ENCODE measurements at regions of chr18 and their contacts with region 1.

Region 1: DNA sequence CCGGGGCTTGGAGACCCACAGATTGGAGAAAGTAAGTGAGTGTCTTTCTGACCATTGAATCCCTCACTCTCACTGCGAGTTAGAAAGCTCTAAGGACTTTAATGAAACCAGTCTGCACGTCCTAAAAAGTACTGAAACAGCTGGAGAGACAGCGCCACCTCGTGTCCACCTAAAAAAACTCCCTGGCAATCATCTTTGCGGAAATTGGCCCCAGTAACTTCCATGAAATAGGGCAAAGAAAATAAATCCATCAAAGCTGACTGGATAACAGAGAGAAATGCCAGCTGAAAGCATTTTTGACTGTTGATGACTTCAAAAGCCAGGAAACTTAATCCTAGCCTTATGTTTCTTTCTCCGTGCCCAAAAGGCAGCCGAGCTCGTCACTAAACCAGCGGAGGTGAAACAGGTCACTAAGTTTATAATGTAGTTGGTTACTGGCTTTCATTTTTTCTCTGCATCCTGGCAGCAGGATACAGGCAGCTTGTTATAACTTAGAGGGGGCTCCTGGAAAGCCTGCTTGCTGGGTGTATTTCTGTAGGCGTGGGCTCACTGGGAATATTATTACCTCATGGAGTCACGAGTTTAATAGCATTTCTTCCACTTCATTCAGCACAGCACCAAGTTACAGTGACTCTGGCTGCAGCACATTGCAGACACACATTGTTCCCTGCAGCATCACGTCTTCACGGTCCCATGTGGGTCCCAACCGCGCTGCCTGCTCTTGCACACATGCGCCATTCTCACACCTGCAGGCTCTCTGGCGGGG is 266.5 kb downstream of the HRH4 start:
- DNase-seq: peak; percentile 76
- ATAC-seq: peak; percentile 78
- H3K4me3 ChIP-seq: peak overlapping the region; percentile 63; the same call in 1 of the 2 replicates
- H3K27ac ChIP-seq: no peak overlapping the region
- H3K4me1 ChIP-seq: peaks cover 4% of the 10 kb centered on the region; the same call in 1 of the 2 replicates
- H3K27me3 ChIP-seq: peaks cover 55% of the 10 kb centered on the region
- CTCF ChIP-seq: peak; percentile 89

Region 2: GRCh38 chr18:24354286-24354685 is 372.6 kb before region 1 on chr18:
- CTCF ChIA-PET with region 1: no interaction called
- POLR2A ChIA-PET with region 1: no interaction called
- intact Hi-C with region 1: loop called (anchors 10 kb)
- DNase-seq: no peak
- ATAC-seq: no peak
- H3K4me3 ChIP-seq: no peak overlapping the region
- H3K27ac ChIP-seq: no peak overlapping the region
- H3K4me1 ChIP-seq: no peaks in the 10 kb centered on the region
- H3K27me3 ChIP-seq: no peaks in the 10 kb centered on the region
- CTCF ChIP-seq: no peak

Region 3: DNA sequence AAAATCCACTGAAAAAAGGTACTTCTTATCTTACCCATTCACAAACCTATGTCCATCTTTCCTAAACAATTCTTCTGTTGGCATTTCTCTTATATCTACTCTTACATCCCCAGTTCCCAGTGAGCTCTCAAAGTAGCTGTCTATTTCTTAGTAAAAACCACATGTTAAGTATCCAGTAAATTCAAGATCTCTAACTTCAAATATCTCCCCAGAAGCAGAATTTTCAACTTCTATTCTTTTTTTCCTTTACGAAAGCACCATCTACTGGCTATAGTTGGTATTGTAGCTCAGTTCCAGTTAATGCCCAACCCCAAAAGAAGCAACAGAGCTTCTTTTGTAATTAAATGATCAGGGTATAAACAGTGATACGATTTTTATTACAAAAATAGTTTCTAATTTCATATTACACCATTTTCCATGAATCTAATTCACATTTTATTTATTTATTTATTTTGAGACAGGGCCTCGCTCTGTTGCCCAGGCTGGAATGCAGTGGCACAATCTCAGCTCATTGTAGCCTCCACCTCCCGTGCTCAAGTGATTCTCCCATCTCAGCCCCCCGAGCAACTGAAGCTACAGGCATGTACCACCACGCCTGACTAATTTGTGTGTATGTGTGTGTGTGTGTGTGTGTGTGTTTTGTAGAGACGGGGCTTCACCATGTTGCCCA is 238.0 kb before region 1 on chr18:
- CTCF ChIA-PET with region 1: interaction called, 5 read pairs
- POLR2A ChIA-PET with region 1: no interaction called
- intact Hi-C with region 1: loop called (anchors 1 kb)
- DNase-seq: peak; percentile 74
- ATAC-seq: 0 out of 2 replicates have a peak, but pooled peaks have one; percentile 24
- H3K4me3 ChIP-seq: no peak overlapping the region
- H3K27ac ChIP-seq: no peak overlapping the region
- H3K4me1 ChIP-seq: peaks cover 3% of the 10 kb centered on the region; the same call in 1 of the 2 replicates
- H3K27me3 ChIP-seq: peaks cover 10% of the 10 kb centered on the region
- CTCF ChIP-seq: peak; percentile 84

Region 4: DNA sequence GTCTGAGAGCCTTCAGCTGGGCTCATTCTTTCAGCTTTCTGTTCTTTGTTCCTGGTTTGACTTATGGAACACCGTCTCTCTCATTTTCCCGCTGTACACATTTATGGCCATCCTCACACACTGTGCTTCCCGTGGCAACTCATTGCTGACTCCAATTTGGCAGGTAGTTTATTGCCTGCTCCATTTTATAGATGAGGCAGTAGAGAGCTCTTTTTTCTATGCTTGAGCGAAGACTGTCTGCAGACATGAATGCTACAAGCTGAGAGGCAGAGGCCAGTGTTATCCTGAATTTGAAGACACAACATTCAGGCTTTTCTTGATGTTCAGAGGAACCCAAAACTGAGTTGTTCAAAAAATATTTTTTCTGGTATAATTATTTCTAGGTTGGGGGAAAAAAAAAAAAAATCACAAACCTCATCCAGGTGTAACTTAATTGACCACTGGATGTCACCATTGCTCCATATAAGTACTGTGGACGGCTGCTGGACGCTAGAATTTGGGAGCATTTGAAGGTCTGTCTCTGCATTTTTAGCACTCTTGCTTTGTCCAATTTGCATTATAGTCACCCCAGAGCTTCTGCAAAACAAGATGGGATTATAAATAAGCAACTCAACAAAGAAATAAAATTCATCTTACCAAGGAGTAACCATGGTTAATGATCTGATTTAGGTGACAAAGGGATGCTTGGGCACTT is 183.0 kb before region 1 on chr18:
- CTCF ChIA-PET with region 1: interaction called, 6 read pairs
- POLR2A ChIA-PET with region 1: no interaction called
- intact Hi-C with region 1: loop called (anchors 1 kb)
- DNase-seq: peak; percentile 58
- ATAC-seq: peak; percentile 38; the same call in 1 of the 2 replicates
- H3K4me3 ChIP-seq: no peak overlapping the region
- H3K27ac ChIP-seq: no peak overlapping the region
- H3K4me1 ChIP-seq: no peaks in the 10 kb centered on the region
- H3K27me3 ChIP-seq: peaks cover 47% of the 10 kb centered on the region
- CTCF ChIP-seq: peak; percentile 78

Region 5: DNA sequence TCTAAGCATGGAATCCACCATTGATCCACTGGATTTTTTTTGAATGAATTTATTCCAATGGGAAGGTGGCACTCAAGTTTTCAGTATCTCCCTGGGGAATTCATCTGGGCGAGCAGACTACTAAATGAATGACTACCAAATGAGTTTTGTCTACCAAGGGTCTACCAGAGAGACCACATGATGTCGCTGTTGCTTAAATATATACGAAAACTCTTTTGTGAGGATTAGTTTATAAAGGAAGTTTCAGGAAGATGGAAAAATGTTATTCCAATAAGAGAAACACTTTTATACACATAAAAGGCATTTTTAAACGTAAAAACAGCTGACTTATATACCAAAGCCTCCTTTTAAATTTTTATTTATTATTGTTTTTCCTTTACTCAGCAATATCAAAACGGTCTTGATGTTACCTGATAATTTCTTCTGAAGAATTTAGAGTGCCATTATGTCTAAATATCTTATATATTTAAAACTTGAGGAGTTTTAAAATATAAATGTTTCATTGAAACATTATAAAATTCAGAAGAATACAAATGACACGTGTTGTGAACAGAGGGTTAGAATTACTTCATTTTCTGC is 126.7 kb before region 1 on chr18:
- CTCF ChIA-PET with region 1: interaction called, 11 read pairs
- POLR2A ChIA-PET with region 1: interaction called, 4 read pairs
- intact Hi-C with region 1: loop called (anchors 1 kb)
- DNase-seq: peak; percentile 69
- ATAC-seq: peak; percentile 64
- H3K4me3 ChIP-seq: no peak overlapping the region
- H3K27ac ChIP-seq: no peak overlapping the region
- H3K4me1 ChIP-seq: no peaks in the 10 kb centered on the region
- H3K27me3 ChIP-seq: peaks cover 78% of the 10 kb centered on the region
- CTCF ChIP-seq: peak; percentile 78